HEK293T (cell line): ENCODE measurements at regions of chrX and their contacts with region 1.

Region 1: GRCh38 chrX:69093960-69094871 is 71.0 kb downstream of the PJA1 start:
- DNase-seq: peak; percentile 79

Region 2: DNA sequence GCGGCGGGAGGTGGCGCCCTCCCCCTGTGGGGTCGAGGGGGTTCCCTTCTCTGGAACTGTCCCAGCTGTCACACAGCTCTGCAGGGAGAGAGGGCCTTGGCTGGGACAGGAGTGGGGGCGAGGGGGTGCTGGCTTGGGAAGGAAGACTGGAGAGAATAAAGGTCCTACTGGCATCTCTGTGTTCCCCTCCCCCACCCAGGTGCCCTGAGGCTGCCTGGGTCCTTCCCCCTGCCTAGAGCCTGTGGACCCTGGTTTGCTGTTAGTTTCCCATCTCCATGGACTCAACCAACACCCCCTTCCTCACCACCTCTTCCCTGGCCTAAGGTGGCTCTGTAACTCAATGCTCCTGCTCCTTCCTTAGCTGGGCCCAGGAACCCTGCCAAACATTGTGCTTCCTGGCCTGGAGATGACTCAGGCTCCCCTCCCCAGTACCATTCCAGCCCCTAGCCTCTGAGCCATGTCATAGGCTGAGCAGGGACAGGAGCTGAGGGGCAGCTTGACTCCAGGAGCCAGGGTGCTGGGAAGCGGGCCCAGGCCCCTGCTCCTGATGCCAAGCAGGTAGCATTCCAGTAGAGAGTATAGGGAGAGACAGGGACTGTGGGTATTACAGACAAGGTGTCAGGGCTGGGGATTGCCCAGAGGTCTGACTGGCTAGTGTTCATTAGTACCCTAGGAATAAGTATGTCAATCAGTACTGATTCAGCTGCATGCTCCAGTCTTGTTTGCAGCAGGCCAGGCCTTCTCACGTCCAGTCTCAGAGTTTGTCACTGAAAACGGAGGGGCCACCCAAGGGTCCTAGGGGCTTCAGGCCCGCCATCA is 164.7 kb before region 1 on chrX:
- CTCF ChIA-PET with region 1: no interaction called
- POLR2A ChIA-PET with region 1: no interaction called
- DNase-seq: no peak

Region 3: DNA sequence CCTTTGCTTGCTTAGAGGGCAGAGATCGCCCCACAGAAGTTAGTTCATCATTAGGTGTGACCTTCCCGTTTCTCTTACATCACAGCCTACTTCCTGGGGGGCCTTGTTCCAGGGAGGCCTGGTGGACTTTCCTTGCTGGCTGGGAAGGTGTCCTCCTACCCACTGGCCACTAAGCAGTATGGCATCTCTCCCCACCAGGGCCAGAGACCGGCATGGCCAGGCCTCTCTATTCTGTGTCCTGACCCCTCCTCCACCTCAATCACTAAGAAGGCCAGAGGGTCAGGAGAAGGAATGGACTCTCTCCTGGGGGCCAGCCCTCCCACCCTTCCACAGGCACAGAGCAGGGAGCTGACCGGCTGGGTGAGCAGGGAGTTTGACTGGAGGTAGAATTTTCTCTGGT is 10.9 kb before region 1 on chrX:
- CTCF ChIA-PET with region 1: interaction called, 15 read pairs
- POLR2A ChIA-PET with region 1: interaction called, 12 read pairs
- DNase-seq: no peak

Region 4: DNA sequence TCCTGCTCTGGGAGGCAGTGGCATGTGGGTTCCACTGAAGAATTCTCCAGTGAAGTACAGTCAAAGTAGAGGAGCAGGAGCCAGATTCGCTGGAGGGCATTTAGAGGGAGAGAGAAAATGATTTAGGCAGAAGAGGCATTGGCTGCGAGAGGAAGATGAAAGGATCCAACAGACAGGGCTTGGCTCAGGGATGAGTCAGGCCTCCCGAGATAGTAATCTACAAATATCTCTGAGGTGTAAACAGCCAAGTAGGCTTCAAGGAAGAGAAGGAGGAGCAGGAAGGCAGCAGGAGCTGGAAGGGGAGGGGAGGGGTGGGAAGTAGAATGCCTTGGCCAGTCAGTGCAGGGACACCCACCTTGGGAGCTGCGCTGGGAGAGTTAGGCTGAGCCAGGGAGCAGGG is 15.5 kb after region 1 on chrX:
- CTCF ChIA-PET with region 1: interaction called, 6 read pairs
- POLR2A ChIA-PET with region 1: interaction called, 10 read pairs
- DNase-seq: no peak